Posterior vena cava (tissue), 2 donors: ENCODE measurements at regions of chr18 and their contacts with region 1.

Region 1: GRCh38 chr18:30578707-30579106 is 463.8 kb downstream of the DSC3 start:
- DNase-seq: no peak

Region 2: GRCh38 chr18:30754846-30755245 is 176.1 kb after region 1 on chr18:
- intact Hi-C with region 1: loop called in 1 of 2 experiments (anchors 5 kb)
- DNase-seq: no peak